PC-9 (cell line): ENCODE measurements at regions of chr2 and their contacts with region 1.

Region 1: GRCh38 chr2:75640621-75641121 is 5.9 kb upstream of the MRPL19 start:
- DNase-seq: peak; percentile 53 to 54
- H3K4me3 ChIP-seq: no peak overlapping the region
- H3K27ac ChIP-seq: no peak overlapping the region
- H3K4me1 ChIP-seq: no peaks in the 10 kb centered on the region; the same call in 1 of the 2 replicates
- H3K27me3 ChIP-seq: no peaks in the 10 kb centered on the region
- CTCF ChIP-seq: peak; percentile 95

Region 2: DNA sequence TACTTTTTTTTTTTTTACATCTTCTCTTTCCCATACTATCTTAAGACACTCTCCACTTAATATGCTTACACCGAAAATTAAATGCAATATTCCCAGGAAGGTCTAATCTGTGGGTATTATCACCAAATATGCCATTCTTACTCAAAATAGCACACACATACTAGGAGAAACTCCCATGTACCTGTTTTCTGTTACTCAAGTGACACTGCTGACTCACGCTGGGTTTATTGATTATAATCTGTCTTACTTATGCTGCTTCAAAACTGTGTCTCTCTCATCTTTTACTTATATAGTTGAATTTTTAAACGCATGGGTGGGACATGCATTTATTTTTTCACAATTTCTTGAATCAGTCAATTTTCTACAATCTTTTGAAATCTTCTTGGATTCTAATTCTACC is 35.8 kb after region 1 on chr2:
- CTCF ChIA-PET with region 1: no interaction called
- POLR2A ChIA-PET with region 1: no interaction called
- intact Hi-C with region 1: loop called (anchors 2 kb)
- DNase-seq: no peak
- H3K4me3 ChIP-seq: no peak overlapping the region
- H3K27ac ChIP-seq: no peak overlapping the region
- H3K4me1 ChIP-seq: no peaks in the 10 kb centered on the region
- H3K27me3 ChIP-seq: no peaks in the 10 kb centered on the region
- CTCF ChIP-seq: no peak

Region 3: DNA sequence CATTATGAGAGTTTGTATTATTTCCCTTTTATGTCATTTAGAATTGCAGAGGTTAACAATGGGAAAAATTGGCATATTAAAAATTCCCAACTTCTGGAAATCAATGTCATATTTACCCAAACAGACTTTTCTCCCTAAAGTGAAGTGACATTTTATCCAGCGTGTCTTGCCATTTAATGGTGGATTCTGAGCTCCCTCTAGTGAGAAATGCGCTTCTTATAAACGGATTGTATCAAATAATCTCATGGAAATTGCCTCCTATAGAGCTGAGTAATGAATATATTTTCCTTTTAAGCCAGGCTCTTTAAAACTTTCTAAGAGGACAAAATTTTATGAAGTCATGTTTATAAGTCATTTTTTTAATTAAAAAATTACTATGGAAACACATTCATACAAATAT is 75.7 kb after region 1 on chr2:
- CTCF ChIA-PET with region 1: no interaction called
- POLR2A ChIA-PET with region 1: no interaction called
- intact Hi-C with region 1: loop called (anchors 2 kb)
- DNase-seq: no peak
- H3K4me3 ChIP-seq: no peak overlapping the region
- H3K27ac ChIP-seq: no peak overlapping the region
- H3K4me1 ChIP-seq: no peaks in the 10 kb centered on the region
- H3K27me3 ChIP-seq: no peaks in the 10 kb centered on the region
- CTCF ChIP-seq: no peak; the same call in 1 of the 2 replicates